Activated naive CD8-positive, alpha-beta T cell treated with anti-CD3 and anti-CD28 coated beads, Interleukin-2, amount 10 ng/mL, durations not matched to agents 7 days and 5 days (primary cell): ENCODE measurements at regions of chr2 and their contacts with region 1.

Region 1: DNA sequence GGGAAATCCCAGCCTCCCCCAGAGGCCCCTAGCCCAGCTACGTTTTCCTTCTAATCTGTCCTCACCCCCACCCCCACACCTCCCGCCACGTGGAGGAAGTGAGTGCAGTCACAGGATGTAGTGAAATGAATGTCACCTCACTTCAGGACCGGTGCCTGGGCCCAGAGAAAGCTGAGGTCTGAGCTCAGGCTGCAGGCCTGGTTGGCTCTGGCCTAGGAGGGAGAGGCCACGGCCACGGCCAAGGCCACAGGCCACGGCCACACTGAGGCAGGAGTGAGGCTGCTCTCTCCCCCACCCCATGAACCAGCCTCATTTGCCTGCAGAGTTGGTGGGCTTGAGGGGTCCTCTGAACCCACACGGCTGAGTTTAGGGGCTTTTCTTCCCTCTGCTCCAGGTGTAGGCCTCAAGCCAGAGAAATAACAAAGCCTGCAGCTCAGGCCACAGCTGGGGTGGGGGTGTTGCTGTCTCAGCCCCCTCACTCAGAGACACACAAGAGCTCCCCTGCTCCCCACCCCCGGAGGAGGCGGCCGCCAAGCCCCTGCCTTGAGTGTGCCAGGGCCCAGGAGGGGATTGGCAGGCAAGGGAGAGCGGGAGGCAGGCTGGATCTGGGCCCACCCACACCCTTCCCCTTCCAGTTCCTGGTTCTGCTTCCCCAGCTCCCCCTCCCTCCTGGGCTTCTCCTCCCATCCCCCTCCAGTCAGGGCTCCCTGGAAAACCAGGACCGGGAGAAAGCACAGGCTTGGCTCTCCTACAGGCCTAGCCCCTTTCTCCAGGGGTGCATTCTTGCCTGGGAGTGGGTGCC is 27.0 kb downstream of the DNMT3A start:
- DNase-seq: peak; percentile 78
- ATAC-seq: peak; percentile 88
- H3K4me3 Mint-ChIP-seq: peak overlapping the region; percentile 82
- H3K27ac Mint-ChIP-seq: peak overlapping the region; percentile 95
- H3K4me1 Mint-ChIP-seq: peaks cover 47% of the 10 kb centered on the region
- H3K27me3 Mint-ChIP-seq: no peaks in the 10 kb centered on the region

Region 2: GRCh38 chr2:25098670-25099486 is 215.8 kb before region 1 on chr2:
- POLR2A ChIA-PET with region 1: no interaction called
- DNase-seq: no peak
- ATAC-seq: no peak
- H3K4me3 Mint-ChIP-seq: no peak overlapping the region
- H3K27ac Mint-ChIP-seq: no peak overlapping the region
- H3K4me1 Mint-ChIP-seq: peaks cover 2% of the 10 kb centered on the region
- H3K27me3 Mint-ChIP-seq: peaks cover 6% of the 10 kb centered on the region

Region 3: DNA sequence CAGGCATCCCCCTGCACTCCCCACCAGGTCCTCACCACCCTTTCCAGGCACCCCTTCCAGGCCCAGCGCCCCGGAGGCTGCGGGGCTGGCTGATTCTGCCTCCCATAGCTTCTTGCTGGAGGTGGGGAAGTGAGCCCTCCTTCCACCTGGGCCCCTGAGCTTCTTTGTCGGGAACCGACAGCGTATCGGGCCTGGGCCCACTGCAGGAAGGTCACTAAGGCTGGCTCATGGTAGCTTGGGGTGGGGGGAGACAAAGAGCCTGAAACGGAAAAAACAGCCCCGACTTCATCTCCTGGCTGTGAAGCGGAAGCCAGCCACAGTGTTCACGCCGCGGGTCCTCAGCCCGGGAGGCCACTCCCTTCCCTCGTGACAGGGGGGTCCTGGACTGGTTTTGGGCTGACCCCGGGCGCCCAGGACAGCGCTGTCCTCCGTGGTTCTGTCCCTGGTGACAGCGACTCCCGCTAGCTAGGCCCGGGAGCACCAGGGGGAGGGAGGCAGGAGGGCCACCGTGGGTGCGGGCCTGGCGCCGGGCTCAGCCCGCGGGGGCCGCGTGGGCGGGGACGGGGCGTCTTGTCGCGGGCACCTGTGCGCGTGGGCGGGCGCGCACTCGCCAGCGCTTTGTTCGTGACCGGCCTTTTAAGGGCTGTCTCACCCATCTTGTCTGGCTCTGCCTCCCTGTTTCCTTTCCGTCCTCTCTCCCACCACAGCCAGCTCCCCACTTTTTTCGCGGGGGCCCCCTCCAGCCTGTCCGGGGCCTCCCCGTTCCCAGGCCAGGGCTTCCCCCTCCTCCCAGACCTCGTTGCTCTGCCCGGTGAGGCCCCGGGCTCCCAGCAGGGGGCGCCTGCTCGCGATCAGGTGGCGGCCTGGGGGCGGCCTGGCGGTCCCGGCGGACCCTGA is 37.9 kb before region 1 on chr2:
- POLR2A ChIA-PET with region 1: interaction called, 50 read pairs
- DNase-seq: peak; percentile 93
- ATAC-seq: peak; percentile 48
- H3K4me3 Mint-ChIP-seq: peak overlapping the region; percentile 71
- H3K27ac Mint-ChIP-seq: peak overlapping the region; percentile 95
- H3K4me1 Mint-ChIP-seq: peaks cover 56% of the 10 kb centered on the region
- H3K27me3 Mint-ChIP-seq: no peaks in the 10 kb centered on the region

Region 4: DNA sequence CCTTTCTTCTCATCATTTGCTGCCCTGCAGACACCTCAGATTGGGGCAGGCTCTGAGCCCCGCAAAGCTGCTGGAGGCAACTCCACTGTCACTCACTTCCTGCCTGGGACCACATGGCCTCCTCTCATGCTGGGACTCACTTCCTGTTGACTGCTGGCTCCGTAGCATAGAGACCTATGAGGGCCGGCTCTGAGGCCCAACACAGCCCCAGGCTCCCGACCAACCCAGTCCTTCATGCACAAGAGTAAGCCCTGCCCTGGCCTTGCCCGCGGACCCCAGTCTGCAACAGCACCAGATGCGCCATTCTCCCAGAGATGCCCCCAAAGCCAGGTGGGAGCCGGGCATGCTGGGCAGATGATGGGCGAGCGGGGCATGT is 28.7 kb before region 1 on chr2:
- POLR2A ChIA-PET with region 1: interaction called, 17 read pairs
- DNase-seq: peak; percentile 77
- ATAC-seq: peak; percentile 100
- H3K4me3 Mint-ChIP-seq: peak overlapping the region; percentile 73
- H3K27ac Mint-ChIP-seq: peak overlapping the region; percentile 99
- H3K4me1 Mint-ChIP-seq: peaks cover 23% of the 10 kb centered on the region
- H3K27me3 Mint-ChIP-seq: no peaks in the 10 kb centered on the region

Region 5: GRCh38 chr2:25294573-25295462 is 19.9 kb before region 1 on chr2:
- POLR2A ChIA-PET with region 1: interaction called, 20 read pairs
- DNase-seq: peak; percentile 83
- ATAC-seq: peak; percentile 89
- H3K4me3 Mint-ChIP-seq: peak overlapping the region; percentile 77
- H3K27ac Mint-ChIP-seq: peak overlapping the region; percentile 93
- H3K4me1 Mint-ChIP-seq: peaks cover 44% of the 10 kb centered on the region
- H3K27me3 Mint-ChIP-seq: no peaks in the 10 kb centered on the region

Region 6: DNA sequence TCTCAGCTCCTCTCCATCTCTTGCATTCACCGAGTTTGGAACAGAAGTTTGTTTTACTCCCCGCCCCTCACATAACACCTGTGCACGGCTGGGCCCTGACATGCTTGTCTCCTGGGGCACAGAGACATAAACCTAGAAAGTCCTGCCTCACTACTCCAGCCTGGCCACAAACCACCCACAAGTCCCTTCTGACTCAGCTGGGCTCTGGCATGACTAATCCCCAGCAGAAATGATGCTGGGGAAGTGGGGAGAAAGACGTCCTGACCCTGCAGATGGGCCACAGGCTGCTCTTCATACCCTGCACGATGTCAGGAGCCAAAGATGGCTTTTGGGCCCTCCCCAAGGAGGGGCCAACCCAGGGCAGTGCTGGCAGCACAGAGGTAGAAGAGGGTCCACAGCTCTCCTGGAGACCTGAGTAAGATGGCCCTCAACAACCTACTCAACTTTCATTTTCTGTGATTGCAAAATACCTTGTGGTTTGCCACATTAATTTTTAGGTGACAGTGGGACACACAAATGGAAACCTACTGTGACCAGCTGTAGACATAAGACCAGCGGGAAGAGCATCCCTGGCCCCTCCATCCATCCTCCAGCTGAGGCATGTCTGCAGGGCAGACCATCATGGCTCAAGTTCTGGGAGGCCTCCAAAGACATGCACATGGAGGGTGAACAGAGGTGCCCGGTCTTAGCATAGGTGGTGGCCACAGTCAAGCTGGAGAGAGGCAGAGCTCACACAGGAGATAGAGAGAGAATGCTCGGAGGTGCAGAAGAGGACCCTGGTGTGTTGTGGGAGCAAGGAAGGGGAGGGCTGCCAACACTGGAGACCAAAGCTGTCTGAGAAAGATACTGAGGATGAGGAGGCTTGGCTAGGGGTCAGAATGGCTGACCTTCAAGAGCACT is 13.0 kb before region 1 on chr2:
- POLR2A ChIA-PET with region 1: interaction called, 21 read pairs
- DNase-seq: peak; percentile 72
- ATAC-seq: peak; percentile 94
- H3K4me3 Mint-ChIP-seq: peak overlapping the region; percentile 20
- H3K27ac Mint-ChIP-seq: peak overlapping the region; percentile 82
- H3K4me1 Mint-ChIP-seq: peaks cover 50% of the 10 kb centered on the region
- H3K27me3 Mint-ChIP-seq: no peaks in the 10 kb centered on the region

Region 7: DNA sequence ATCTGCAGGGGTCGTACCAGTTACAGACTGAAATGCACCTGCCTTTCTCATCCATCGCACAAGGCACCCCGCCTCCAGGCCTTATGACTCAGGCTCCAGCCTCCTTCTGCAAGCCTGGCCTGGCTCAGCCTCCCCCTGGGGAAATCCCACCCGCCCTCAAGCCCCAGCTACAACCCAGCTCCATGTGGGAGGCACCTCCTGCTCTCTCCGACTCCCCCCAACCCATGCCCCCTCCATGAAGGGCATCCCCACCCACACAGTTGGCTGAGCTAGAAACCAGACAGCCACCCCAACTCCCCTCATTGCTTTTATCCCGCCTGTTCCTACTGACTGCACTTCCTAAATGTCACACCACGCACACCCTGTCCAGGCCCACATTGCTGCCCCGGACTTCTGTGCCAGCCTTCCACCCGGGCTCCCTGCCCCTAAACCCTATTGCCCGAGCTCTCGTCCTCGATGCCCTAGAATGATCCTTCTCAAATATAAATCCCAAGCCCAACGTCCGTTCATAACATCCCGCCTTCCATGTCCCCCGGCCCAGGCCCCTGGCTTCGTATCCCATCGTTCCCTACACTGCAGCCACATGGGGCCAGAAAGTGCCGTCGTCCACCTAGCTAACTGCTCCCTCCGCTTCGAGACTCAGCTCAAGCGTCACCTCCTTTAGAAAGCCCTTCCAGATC is 17.1 kb after region 1 on chr2:
- POLR2A ChIA-PET with region 1: interaction called, 42 read pairs
- DNase-seq: no peak
- ATAC-seq: no peak
- H3K4me3 Mint-ChIP-seq: no peak overlapping the region
- H3K27ac Mint-ChIP-seq: peak overlapping the region; percentile 62
- H3K4me1 Mint-ChIP-seq: peaks cover 48% of the 10 kb centered on the region
- H3K27me3 Mint-ChIP-seq: no peaks in the 10 kb centered on the region

Region 8: GRCh38 chr2:25341011-25341727 is 26.5 kb after region 1 on chr2:
- POLR2A ChIA-PET with region 1: interaction called, 42 read pairs
- DNase-seq: peak; percentile 54
- ATAC-seq: no peak
- H3K4me3 Mint-ChIP-seq: no peak overlapping the region
- H3K27ac Mint-ChIP-seq: no peak overlapping the region
- H3K4me1 Mint-ChIP-seq: peaks cover 37% of the 10 kb centered on the region
- H3K27me3 Mint-ChIP-seq: no peaks in the 10 kb centered on the region

Region 9: GRCh38 chr2:25417715-25418369 is 103.1 kb after region 1 on chr2:
- POLR2A ChIA-PET with region 1: no interaction called
- DNase-seq: no peak
- ATAC-seq: no peak
- H3K4me3 Mint-ChIP-seq: no peak overlapping the region
- H3K27ac Mint-ChIP-seq: peak overlapping the region; percentile 25
- H3K4me1 Mint-ChIP-seq: peaks cover 21% of the 10 kb centered on the region
- H3K27me3 Mint-ChIP-seq: no peaks in the 10 kb centered on the region